ENCODE measurements at regions of chr6 and their contacts with region 1.

Region 1: DNA sequence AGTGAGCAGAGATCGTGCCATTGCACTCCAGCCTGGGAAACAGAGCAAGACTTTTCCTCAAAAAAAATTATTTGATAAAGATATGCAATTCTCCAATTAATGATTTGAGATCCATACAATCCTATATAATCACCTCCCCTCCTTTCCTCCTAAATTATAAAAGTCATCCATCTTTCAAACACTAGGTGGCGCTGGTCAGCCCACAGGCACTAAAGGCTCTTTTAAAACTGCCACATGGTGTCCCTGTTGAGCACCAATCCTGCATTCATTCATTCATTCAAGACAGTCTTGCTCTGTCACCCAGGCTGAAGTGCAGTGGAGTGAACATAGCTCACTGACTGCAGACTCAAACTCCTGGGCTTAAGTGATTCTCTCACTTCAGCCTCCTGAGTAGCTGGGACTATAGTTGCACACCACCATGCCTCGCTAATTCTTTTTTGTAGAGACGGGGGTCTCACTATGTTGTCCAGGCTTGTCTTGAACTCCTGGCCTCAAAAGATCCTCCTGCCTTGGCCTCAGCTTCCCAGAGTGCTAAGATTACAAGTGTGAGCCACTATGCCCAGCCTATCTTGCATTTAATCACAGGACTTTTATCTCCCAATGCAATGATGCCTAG is 58.7 kb upstream of the SLC2A12 start:
- DNase-seq: peak; percentile 43 to 67 (median 57)
- H3K4me3 ChIP-seq: no peak overlapping the region
- H3K4me3 Mint-ChIP-seq: no peak overlapping the region
- H3K27ac ChIP-seq: no peak overlapping the region
- H3K27ac Mint-ChIP-seq: no peak overlapping the region
- H3K4me1 ChIP-seq: no peaks in the 10 kb centered on the region
- H3K4me1 Mint-ChIP-seq: peaks cover 0 to 5% (median 0%) of the 10 kb centered on the region in 4 donors
- H3K27me3 ChIP-seq: no peaks in the 10 kb centered on the region
- H3K27me3 Mint-ChIP-seq: peaks cover 4 to 20% of the 10 kb centered on the region in 2 donors

Region 2: DNA sequence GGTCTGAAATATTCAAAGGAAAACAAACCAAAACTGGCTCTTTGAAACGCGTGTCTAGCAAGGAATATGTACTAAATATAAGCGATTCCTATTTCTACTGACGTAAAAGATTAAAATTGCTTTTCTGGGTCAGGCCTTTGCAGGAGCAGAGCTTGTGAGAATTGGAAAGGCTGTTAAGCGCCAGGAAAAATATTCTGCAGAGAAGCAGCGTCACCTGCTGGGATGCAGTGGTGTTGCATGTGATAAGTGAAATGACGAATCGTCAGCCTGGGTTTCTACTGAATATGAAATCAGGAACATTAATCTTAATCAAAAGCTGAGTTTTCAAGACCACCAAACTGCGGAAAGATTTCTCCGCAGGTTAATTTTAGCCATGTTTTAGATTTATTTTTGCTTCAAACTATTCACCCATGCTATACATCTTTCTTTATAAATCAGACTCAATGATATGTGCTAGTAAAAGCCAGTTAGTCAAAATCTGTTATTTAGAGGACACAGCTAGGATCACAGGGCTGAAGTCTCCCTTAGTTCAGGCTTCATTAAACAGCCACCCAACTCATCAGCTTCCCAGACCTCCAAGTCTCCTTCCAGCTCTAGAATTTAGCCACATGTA is 771.4 kb after region 1 on chr6:
- CTCF ChIA-PET with region 1: interaction called, 4 read pairs
- POLR2A ChIA-PET with region 1: no interaction called
- intact Hi-C with region 1: loop called (anchors 1 kb)
- DNase-seq: peak; percentile 22 to 49 (median 45)
- H3K4me3 ChIP-seq: no peak overlapping the region
- H3K4me3 Mint-ChIP-seq: no peak overlapping the region
- H3K27ac ChIP-seq: no peak overlapping the region
- H3K27ac Mint-ChIP-seq: no peak overlapping the region
- H3K4me1 ChIP-seq: no peaks in the 10 kb centered on the region
- H3K4me1 Mint-ChIP-seq: no peaks in the 10 kb centered on the region
- H3K27me3 ChIP-seq: no peaks in the 10 kb centered on the region
- H3K27me3 Mint-ChIP-seq: peaks cover 14 to 18% of the 10 kb centered on the region in 2 donors